Aorta (tissue), 5 donors: ENCODE measurements at regions of chr1 and their contacts with region 1.

Region 1: GRCh38 chr1:176656257-176656995 is 193.5 kb downstream of the PAPPA2 start:
- DNase-seq: no peak
- ATAC-seq: peak; percentile 89
- H3K4me3 ChIP-seq: no peak overlapping the region
- H3K27ac ChIP-seq: peak overlapping the region; percentile 100
- H3K4me1 ChIP-seq: peaks cover 5% of the 10 kb centered on the region in 2 donors
- H3K27me3 ChIP-seq: no peaks in the 10 kb centered on the region

Region 2: DNA sequence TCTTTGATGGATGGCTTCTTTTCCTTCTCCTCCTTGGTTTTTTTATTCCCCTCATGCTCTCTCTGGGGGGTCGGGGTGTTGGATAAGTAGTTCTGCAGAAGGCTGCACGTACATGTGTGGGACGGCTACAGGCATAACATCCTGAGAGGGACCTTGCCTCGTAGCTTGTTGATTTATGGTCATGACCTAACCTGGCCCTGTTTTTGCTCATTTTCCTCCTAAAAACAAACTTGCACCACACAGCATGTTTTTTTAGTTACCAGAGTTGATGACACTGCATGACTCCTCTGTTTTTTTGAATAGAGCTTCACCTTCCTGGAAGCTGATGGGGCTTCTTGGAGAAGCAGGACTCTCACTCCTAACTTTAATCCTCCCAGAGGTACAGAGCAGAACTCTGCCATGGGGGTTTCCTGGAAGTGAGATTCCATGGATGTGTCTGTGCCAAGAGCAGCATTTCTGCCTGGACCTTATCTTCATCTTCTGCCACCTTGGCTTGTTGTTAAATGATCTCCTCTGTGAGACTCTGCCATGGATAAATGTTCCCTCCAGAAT is 78.7 kb before region 1 on chr1:
- intact Hi-C with region 1: loop called in 1 of 2 experiments (anchors 5 kb)
- DNase-seq: no peak
- ATAC-seq: no peak
- H3K4me3 ChIP-seq: no peak overlapping the region
- H3K27ac ChIP-seq: no peak overlapping the region
- H3K4me1 ChIP-seq: peaks cover 0 to 8% of the 10 kb centered on the region in 2 donors
- H3K27me3 ChIP-seq: no peaks in the 10 kb centered on the region

Region 3: GRCh38 chr1:177274687-177275211 is 618.3 kb after region 1 on chr1:
- intact Hi-C with region 1: loop called in 1 of 2 experiments (anchors 5 kb)
- DNase-seq: no peak
- ATAC-seq: peak; percentile 64
- H3K4me3 ChIP-seq: no peak overlapping the region
- H3K27ac ChIP-seq: peak overlapping the region in 1 of 2 donors; percentile 56
- H3K4me1 ChIP-seq: no peaks in the 10 kb centered on the region
- H3K27me3 ChIP-seq: no peaks in the 10 kb centered on the region